ENCODE measurements at regions of chr2 and their contacts with region 1.

Region 1: DNA sequence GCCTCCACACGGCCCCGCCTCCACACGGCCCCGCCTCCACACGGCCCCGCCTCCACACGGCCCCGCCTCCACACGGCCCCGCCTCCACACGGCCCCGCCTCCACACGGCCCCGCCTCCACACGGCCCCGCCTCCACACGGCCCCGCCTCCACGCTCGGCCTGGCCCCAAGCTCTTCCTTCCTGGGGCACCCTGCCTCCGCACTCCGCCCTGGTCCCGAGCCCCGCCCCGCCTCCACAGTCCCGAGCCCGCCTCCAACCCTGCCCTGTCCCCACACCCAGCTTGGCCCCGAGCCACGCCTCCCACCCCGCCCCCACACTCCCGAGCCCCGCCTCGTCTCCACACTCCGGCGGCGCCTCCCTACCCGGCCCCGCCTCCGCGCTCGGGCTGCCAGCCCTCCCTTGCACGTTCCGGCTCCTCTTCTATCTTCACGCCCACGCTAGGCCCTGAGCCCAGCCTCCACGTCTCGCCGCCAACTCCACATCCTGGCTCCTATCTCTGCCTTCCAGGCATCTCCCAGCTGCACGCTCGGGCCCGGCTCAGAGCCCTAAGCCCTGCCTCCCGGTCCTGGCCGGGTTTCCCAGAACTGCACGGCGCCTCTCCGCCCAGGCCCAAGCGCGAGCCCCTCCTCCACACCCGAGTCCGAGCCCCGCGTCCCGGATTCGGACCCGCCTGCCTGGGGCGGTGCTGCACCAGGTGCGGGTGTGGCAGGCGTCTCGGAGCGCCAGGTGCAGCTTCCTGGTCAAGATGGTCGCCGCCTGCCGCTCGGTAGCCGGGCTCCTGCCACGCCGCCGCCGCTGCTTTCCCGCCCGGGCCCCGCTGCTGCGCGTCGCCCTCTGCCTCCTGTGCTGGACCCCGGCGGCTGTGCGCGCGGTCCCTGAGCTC is at the start of gene TMEM87B:
- DNase-seq: peak; percentile 96 to 97
- ATAC-seq: peak; percentile 77 to 78
- H3K4me3 ChIP-seq: peak within 1 kb of the TSS; percentile 70 to 95 (median 84)
- H3K27ac ChIP-seq: peak within 1 kb of the TSS; percentile 87 to 96 (median 94)
- H3K4me1 ChIP-seq: peaks cover 13 to 18% of the 10 kb centered on the region in 2 donors
- H3K27me3 ChIP-seq: no peaks in the 10 kb centered on the region
- CTCF ChIP-seq: no peak
- POLR2A ChIP-seq: peak; percentile 36 to 58
- total RNA-seq, gene TMEM87B: 2.6 to 5.0 (median 3.1) TPM

Region 2: GRCh38 chr2:111883661-111884591 is 171.2 kb before region 1 on chr2 and contains the start of gene ANAPC1:
- in situ Hi-C with region 1: loop called in 1 of 4 experiments (anchors 5 kb)
- intact Hi-C with region 1: loop called (anchors 1 kb)
- DNase-seq: peak; percentile 64 to 67
- ATAC-seq: peak; percentile 97 to 98
- H3K4me3 ChIP-seq: peak within 1 kb of the TSS; percentile 79 to 98 (median 91)
- H3K27ac ChIP-seq: peak within 1 kb of the TSS; percentile 83 to 89 (median 86)
- H3K4me1 ChIP-seq: peaks cover 7 to 18% of the 10 kb centered on the region in 2 donors
- H3K27me3 ChIP-seq: no peaks in the 10 kb centered on the region
- CTCF ChIP-seq: no peak
- POLR2A ChIP-seq: peak; percentile 42 to 57
- total RNA-seq, gene ANAPC1: 28.3 to 33.9 (median 30.8) TPM

Region 3: DNA sequence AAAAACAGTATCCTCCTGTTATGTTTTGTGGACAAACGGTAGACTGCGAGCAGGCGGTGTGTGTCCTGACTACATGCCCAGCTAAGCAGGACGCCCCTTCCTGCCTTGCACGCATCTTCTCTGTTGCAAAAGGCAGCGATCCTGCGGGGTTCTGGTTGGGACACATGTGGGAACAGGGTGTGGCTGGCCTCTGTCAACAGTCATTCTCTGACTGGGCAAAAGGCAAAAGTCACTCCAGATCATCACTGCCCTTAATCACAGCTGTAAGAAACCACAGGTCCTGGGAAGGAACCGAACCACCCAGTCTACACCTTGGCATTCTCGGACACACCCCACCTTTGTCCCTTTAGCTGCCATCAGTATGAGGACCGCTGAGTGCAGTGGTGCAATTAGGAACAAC is 44.3 kb before region 1 on chr2:
- in situ Hi-C with region 1: no loop called
- intact Hi-C with region 1: no loop called
- DNase-seq: no peak
- ATAC-seq: no peak
- H3K4me3 ChIP-seq: no peak overlapping the region
- H3K27ac ChIP-seq: no peak overlapping the region
- H3K4me1 ChIP-seq: no peaks in the 10 kb centered on the region
- H3K27me3 ChIP-seq: no peaks in the 10 kb centered on the region
- CTCF ChIP-seq: no peak
- POLR2A ChIP-seq: no peak

Region 4: DNA sequence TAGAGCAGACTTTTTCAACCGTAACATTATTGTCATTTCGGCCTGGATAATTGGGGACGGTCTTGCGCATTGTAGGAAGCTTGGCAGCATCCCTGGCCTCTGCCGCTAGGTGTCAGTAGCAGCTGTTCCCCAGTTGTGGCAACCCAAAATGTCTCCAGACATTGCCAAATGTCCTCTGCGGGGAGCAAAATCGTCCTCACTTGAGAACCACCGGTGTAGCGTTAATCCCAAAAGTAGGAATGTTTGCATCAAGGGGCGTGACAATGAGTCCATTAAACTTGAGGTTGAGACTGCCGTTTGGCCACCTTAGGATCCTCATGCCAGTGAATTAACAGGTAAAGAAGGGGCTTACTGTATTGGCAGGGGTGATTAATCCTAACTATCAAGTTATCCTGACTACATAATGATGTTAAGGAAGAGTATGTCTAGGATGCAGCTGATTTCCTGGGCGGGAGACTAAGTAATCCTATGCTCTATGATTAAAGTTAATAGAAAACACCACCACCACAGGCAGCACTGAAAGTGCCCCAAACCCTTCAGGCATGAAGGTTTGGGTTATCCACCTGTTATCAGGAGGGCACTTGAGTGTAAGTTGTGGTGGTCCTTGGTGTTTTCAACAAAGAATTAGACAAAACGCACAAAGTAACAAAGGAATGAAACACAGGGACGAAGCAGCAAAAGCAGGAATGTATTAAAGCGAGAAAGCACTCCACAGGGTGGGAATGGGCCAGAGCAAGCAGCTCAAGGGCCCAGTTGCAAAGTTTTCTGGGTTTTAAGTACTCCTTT is 204.6 kb after region 1 on chr2:
- in situ Hi-C with region 1: loop called in 2 of 4 experiments (anchors 10 kb)
- intact Hi-C with region 1: loop called (anchors 1 kb)
- DNase-seq: peak; percentile 58 to 79
- ATAC-seq: peak; percentile 71 to 74
- H3K4me3 ChIP-seq: peak overlapping the region in 1 of 4 donors; percentile 27
- H3K27ac ChIP-seq: no peak overlapping the region
- H3K4me1 ChIP-seq: peaks cover 5 to 6% of the 10 kb centered on the region in 2 donors
- H3K27me3 ChIP-seq: no peaks in the 10 kb centered on the region
- CTCF ChIP-seq: peak; percentile 86 to 96 (median 92)
- POLR2A ChIP-seq: no peak

Region 5: DNA sequence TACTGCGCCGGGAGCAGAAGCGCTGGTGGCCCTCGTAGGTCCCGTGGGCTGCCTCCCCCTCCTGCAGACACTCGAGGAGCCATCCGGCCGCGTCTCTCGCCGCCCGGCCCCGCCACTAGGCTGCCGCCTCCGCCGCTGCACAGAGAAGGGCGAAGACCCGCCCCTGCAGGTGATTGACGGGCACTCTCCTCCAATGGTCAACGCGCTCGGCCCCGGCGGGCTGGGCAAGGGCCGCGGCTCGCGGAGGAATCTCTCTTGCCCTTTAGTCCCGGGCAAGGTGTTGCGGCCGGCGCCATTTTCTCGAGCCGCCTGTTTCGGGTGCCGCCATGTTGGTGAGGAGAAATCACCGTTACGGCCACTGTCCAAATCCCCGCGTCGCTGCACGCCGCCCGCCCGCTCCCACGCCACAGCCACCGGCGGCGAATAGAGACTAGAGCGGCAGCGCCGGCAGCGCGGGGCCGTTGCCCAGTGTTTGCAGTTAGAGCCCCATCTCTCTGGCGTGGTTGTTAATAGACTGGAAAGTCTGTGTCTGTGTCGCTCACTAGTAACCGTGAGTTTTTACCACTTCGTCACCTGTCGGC is 220.3 kb after region 1 on chr2 and contains the start of gene ZC3H6:
- in situ Hi-C with region 1: no loop called
- intact Hi-C with region 1: loop called (anchors 1 kb)
- DNase-seq: peak; percentile 98 to 99
- ATAC-seq: peak; percentile 93 to 94
- H3K4me3 ChIP-seq: peak within 1 kb of the TSS; percentile 88 to 97 (median 94)
- H3K27ac ChIP-seq: peak within 1 kb of the TSS; percentile 99 to 100 (median 100)
- H3K4me1 ChIP-seq: peaks cover 22 to 26% of the 10 kb centered on the region in 2 donors
- H3K27me3 ChIP-seq: no peaks in the 10 kb centered on the region
- CTCF ChIP-seq: peak in 4 of 5 experiments; percentile 32 to 49 (median 43)
- POLR2A ChIP-seq: peak; percentile 86 to 91
- total RNA-seq, gene ZC3H6: 6.3 to 15.1 (median 9.9) TPM

Region 6: GRCh38 chr2:112481050-112481527 is 426.0 kb after region 1 on chr2:
- in situ Hi-C with region 1: no loop called
- intact Hi-C with region 1: loop called (anchors 1 kb)
- DNase-seq: peak; percentile 75
- ATAC-seq: peak; percentile 80 to 81
- H3K4me3 ChIP-seq: peak overlapping the region; percentile 70 to 99 (median 90)
- H3K27ac ChIP-seq: peak overlapping the region; percentile 89 to 94 (median 91)
- H3K4me1 ChIP-seq: peaks cover 16 to 18% of the 10 kb centered on the region in 2 donors
- H3K27me3 ChIP-seq: no peaks in the 10 kb centered on the region
- CTCF ChIP-seq: peak; percentile 58 to 89 (median 74)
- POLR2A ChIP-seq: no peak

Measured in gastrocnemius medialis (tissue), 4 donors.